Activated naive CD4-positive, alpha-beta T cell treated with anti-CD3 and anti-CD28 coated beads for 36 hours (primary cell): ENCODE measurements at regions of chr10 and their contacts with region 1.

Region 1: GRCh38 chr10:18104223-18104872 is 35.9 kb upstream of the CACNB2 start:
- DNase-seq: peak; percentile 63
- H3K4me3 Mint-ChIP-seq: no peak overlapping the region
- H3K27ac Mint-ChIP-seq: no peak overlapping the region
- H3K4me1 Mint-ChIP-seq: no peaks in the 10 kb centered on the region
- H3K27me3 Mint-ChIP-seq: peaks cover 5% of the 10 kb centered on the region

Region 2: DNA sequence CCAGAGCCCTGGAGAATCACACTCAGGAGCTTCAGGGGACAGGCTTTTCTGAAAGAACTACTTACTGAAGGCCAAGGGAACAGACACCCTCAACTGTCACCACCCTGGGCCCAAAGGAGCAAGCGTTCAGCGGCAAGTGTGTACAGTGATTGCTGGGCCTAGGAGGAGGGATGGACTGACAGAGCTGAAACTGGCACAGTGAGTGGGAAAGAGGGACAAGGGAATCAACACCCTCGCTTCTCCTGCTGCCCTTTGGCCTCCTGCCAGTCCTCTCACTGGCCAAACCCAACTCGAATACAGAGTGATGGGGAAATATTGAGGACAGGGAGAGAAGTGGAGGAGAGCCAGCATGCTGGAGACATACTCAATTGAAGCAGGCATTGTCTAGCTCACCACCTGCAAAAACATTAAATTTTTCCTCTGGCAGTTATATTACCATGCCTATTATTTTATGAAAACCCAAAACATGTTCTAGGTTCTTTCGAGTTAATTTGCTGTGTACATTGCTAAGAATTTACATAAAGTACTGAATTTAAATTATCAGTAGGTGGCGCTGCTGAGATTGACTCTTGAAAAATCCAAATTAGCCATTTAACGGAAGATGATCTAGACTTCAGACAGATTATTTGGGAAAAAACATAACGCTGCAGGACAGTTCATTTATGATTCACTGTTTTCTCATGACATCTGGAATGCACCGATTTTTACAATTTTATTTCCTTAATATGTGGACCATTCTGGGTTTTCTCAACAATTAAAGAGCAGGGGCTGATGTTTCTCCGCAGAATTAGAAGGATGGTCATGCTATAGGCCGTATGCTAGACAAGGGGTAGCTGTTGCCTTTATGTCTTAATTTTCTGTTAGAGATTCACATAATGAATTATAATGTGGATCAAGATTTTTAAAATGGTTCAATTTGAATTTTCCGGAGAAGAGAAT is 367.1 kb before region 1 on chr10:
- CTCF ChIA-PET with region 1: no interaction called
- intact Hi-C with region 1: loop called (anchors 1 kb)
- DNase-seq: no peak
- H3K4me3 Mint-ChIP-seq: no peak overlapping the region
- H3K27ac Mint-ChIP-seq: no peak overlapping the region
- H3K4me1 Mint-ChIP-seq: peaks cover 2% of the 10 kb centered on the region
- H3K27me3 Mint-ChIP-seq: no peaks in the 10 kb centered on the region

Region 3: DNA sequence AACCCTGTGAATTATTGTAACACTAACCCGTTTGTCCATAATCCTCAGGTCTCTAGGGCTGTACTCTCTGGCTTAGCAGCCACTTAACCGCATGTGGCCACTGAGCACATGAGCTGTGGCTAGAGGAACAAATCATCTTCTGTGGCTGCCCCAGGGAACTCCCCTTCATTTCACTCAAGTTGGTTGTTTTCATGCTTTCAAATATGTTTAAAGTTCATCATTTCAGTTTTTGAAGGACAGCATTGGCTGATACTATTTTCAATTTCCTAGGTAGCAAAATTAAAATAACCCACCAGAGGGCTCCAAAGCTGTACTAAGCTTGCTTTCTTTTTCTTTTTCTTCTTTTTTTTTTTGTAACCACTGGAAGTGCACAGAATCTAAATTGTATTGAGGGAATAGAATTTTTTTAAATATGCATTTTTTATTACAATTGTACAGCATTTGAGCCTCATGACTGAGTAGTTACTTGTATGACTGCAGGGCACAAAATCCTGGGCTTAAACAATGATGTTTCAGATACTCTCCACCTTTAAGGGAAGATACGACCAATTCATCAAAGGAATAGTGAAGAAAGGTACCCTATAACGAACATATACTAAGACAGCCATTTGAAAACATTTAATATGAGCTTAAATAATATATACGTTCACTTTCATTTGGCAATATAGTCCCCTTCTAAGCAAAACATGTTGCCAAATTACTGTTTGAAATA is 256.6 kb before region 1 on chr10:
- CTCF ChIA-PET with region 1: interaction called, 3 read pairs
- intact Hi-C with region 1: loop called (anchors 5 kb)
- DNase-seq: no peak
- H3K4me3 Mint-ChIP-seq: no peak overlapping the region
- H3K27ac Mint-ChIP-seq: no peak overlapping the region
- H3K4me1 Mint-ChIP-seq: no peaks in the 10 kb centered on the region
- H3K27me3 Mint-ChIP-seq: peaks cover 6% of the 10 kb centered on the region

Region 4: DNA sequence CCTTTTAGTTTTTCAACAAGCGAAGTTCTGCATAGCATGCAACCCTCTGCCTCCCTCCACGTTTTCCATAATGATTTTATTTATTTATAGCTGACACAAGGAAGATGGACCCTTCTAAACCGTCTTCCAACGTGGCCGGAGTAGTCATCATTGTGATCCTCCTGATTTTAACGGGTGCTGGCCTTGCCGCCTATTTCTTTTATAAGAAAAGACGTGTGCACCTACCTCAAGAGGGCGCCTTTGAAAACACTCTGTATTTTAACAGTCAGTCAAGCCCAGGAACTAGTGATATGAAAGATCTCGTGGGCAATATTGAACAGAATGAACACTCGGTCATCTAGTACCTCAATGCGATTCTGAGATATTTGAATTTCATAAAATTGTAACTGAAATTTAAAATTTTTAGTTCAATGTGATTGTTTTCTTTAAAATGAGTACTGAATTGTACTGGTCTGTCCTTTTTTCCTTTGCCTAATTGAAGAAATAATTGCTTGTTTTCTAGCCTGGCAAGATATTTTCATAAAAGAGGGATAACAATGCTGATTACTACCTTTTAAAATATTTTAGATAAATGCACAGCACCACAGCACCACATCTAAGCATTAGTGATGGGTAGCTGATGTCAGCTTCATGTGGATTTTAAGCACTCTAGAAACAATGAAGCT is 194.1 kb before region 1 on chr10:
- CTCF ChIA-PET with region 1: no interaction called
- intact Hi-C with region 1: loop called (anchors 10 kb)
- DNase-seq: peak; percentile 20
- H3K4me3 Mint-ChIP-seq: no peak overlapping the region
- H3K27ac Mint-ChIP-seq: no peak overlapping the region
- H3K4me1 Mint-ChIP-seq: no peaks in the 10 kb centered on the region
- H3K27me3 Mint-ChIP-seq: peaks cover 16% of the 10 kb centered on the region